Endothelial cell of umbilical vein (primary cell): ENCODE measurements at regions of chr6 and their contacts with region 1.

Region 1: DNA sequence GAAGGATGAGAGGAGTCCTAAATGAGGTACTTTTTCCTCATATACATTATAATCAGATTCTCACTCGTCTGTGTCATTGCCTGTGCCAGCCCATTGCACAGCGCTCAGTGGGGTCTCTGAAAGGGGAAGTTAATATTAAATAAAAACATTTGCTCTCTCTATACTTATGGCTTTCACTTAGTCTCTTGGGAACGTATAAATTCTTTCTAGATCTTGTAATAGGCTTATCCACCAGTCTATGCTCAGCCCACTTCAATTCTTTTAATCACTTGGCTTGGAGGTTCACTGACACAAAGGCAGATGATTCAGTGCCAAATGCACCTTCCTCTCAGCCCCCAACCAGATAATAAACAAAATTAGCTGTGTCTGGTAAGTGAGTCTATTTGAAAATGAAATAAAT is 164.3 kb upstream of the OGFRL1 start:
- DNase-seq: no peak
- H3K4me3 ChIP-seq: no peak overlapping the region
- H3K27ac ChIP-seq: no peak overlapping the region
- H3K4me1 ChIP-seq: no peaks in the 10 kb centered on the region
- H3K27me3 ChIP-seq: no peaks in the 10 kb centered on the region
- CTCF ChIP-seq: no peak
- POLR2A ChIP-seq: no peak

Region 2: GRCh38 chr6:70839286-70840266 is 284.8 kb before region 1 on chr6:
- CTCF ChIA-PET with region 1: no interaction called
- POLR2A ChIA-PET with region 1: no interaction called
- dilution Hi-C with region 1: no loop called
- intact Hi-C with region 1: no loop called
- DNase-seq: no peak
- H3K4me3 ChIP-seq: no peak overlapping the region
- H3K27ac ChIP-seq: no peak overlapping the region
- H3K4me1 ChIP-seq: no peaks in the 10 kb centered on the region
- H3K27me3 ChIP-seq: no peaks in the 10 kb centered on the region
- CTCF ChIP-seq: no peak
- POLR2A ChIP-seq: no peak

Region 3: DNA sequence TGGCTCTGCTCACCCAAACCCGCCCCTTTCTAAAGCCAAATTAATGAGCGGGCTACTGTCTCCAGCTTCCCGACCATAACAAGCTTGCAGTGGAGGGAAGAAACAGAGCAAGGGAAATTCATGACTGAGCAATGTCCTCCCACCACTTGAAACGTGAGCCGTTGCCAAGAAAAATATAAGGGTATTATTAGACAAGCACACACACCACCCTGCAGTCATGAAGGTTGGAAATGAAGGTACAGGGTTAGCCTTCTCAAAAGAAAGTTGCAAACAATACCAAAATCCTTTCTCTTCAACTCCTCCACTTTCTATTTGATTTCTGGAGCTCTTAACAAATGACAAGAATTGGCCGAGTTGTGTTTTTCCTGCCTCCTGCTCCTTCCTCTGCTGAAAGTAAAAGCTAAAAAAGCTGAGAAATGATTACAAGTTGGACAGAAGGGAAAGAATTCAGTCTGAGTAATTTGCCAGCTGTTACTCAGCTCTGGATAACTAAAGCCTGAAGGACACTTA is 16.4 kb before region 1 on chr6:
- CTCF ChIA-PET with region 1: interaction called, 5 read pairs
- POLR2A ChIA-PET with region 1: no interaction called
- dilution Hi-C with region 1: no loop called
- intact Hi-C with region 1: loop called (anchors 1 kb)
- DNase-seq: peak; percentile 81
- H3K4me3 ChIP-seq: peak overlapping the region in 1 of 3 experiments; percentile 22
- H3K27ac ChIP-seq: no peak overlapping the region
- H3K4me1 ChIP-seq: peaks cover 8% of the 10 kb centered on the region
- H3K27me3 ChIP-seq: peaks cover 0 to 2% of the 10 kb centered on the region in 2 experiments
- CTCF ChIP-seq: no peak
- POLR2A ChIP-seq: no peak

Region 4: GRCh38 chr6:71288228-71289001 is 164.1 kb after region 1 on chr6 and contains the start of gene OGFRL1:
- CTCF ChIA-PET with region 1: no interaction called
- POLR2A ChIA-PET with region 1: no interaction called
- dilution Hi-C with region 1: no loop called
- intact Hi-C with region 1: no loop called
- DNase-seq: peak; percentile 56
- H3K4me3 ChIP-seq: peak within 1 kb of the TSS; percentile 71 to 79 (median 75)
- H3K27ac ChIP-seq: peak within 1 kb of the TSS; percentile 60
- H3K4me1 ChIP-seq: peaks cover 28% of the 10 kb centered on the region
- H3K27me3 ChIP-seq: no peaks in the 10 kb centered on the region
- CTCF ChIP-seq: peak in 1 of 2 donors; percentile 5
- POLR2A ChIP-seq: peak; percentile 89
- total RNA-seq, gene OGFRL1: 19.4 and 21.1 TPM in 2 replicates